H1 (cell line): ENCODE measurements at regions of chr5 and their contacts with region 1.

Region 1: DNA sequence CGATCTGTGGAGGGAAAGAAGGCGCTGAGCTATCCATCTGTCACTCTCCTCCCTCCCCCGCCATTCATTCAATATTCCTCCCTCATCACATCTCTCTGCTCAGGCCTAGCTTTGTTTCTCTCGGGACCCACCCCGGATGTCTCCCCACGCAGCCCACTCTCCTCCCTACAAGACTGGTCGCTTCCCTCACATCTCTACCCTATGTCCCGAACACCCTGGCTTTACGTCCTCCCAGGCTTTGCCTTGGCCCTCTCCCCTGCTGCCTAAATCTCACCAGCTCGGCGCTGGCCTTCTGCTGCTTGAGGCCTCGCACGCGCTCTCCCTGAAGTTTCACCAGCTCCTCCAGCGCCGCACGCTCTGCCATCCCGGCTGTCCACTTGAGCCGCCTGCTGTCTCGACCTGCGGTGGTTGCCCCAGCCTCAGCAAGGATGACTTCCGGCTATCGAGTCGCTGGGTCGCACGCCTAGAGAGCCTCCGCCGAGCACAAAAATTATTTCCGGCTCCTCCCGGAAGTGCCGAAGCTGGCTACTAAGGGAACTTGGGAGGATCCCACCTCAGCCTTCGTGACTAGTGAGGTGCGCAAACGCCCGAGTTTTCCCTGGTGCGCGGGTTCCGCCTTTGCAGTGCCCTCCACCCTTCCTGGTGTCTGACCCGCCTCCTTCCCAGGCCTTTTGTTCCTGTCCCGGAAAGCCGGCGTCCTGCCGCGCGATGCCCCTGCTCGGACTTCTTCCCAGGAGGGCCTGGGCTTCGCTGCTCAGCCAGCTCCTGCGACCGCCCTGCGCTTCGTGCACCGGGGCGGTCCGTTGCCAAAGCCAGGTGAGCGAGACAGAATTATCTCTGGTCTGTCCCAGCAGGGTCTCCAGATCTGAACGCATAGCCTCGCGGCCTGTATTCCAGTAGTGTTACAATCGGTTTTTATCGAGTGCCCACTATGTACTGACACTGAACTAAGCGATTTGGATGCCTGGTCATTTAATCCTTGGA is at the starts of genes HARS1 and HARS2:
- DNase-seq: peak; percentile 88 to 91
- H3K4me3 ChIP-seq: peak within 1 kb of the TSS; percentile 76 to 98 (median 88)
- H3K27ac ChIP-seq: 0 out of 2 replicates have a peak within 1 kb of the TSS, but pooled peaks have one; percentile 43
- H3K4me1 ChIP-seq: no peaks in the 10 kb centered on the region; a peak in 1 of 7 replicates
- H3K27me3 ChIP-seq: no peaks in the 10 kb centered on the region
- CTCF ChIP-seq: no peak
- EP300 ChIP-seq: no peak
- POLR2A ChIP-seq: peak; percentile 71 to 77
- RAD21 ChIP-seq: no peak
- total RNA-seq, gene HARS1: 55.6 and 56.8 TPM in 2 replicates
- total RNA-seq, gene HARS2: 21.4 and 23.1 TPM in 2 replicates

Region 2: DNA sequence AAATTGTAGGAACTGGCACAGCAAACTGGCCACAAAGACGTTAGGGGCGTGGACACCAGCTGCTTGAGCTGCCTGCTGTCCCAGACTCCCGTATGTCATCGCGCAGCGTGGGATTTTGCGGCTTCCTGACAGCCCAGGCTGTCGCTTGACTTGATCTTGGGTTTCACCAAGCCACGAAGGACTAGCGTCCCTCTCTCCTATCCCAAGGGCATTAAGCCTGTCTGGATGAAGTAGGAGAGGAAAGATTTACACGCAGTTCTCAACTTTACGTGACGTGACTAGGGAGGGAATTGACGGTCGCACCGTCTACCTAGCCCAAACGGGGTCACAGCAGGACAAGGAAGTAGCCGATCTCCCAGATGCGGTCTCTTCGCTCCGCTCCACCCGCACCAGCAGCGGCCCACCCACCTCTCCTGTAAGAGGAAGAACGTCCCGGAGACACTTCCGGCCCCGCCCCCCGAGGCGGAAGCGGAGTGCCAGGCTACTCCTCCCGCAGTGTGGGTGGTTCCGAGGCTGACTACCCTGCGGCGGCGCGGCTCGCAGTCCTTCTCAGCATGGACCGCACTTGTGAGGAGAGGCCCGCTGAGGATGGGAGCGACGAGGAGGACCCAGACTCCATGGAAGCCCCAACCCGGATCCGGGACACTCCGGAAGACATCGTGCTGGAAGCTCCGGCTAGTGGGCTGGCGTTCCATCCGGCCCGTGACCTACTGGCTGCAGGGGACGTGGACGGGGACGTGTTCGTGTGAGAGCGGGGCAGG is 26.7 kb before region 1 on chr5 and contains the start of gene WDR55:
- CTCF ChIA-PET with region 1: interaction called, 3 read pairs
- POLR2A ChIA-PET with region 1: interaction called, 85 read pairs
- DNase-seq: peak; percentile 79 to 94
- H3K4me3 ChIP-seq: peak within 1 kb of the TSS; percentile 82 to 98 (median 94)
- H3K27ac ChIP-seq: no peak within 1 kb of the TSS
- H3K4me1 ChIP-seq: no peaks in the 10 kb centered on the region; a peak in 1 of 7 replicates
- H3K27me3 ChIP-seq: no peaks in the 10 kb centered on the region
- CTCF ChIP-seq: no peak
- EP300 ChIP-seq: 0 out of 3 replicates have a peak, but pooled peaks of 1 of the 2 experiments have one; percentile 11
- POLR2A ChIP-seq: peak in 1 of 2 experiments; percentile 71; a peak in 2 of 3 replicates
- RAD21 ChIP-seq: no peak
- total RNA-seq, gene WDR55: 22.7 and 22.8 TPM in 2 replicates

Region 3: DNA sequence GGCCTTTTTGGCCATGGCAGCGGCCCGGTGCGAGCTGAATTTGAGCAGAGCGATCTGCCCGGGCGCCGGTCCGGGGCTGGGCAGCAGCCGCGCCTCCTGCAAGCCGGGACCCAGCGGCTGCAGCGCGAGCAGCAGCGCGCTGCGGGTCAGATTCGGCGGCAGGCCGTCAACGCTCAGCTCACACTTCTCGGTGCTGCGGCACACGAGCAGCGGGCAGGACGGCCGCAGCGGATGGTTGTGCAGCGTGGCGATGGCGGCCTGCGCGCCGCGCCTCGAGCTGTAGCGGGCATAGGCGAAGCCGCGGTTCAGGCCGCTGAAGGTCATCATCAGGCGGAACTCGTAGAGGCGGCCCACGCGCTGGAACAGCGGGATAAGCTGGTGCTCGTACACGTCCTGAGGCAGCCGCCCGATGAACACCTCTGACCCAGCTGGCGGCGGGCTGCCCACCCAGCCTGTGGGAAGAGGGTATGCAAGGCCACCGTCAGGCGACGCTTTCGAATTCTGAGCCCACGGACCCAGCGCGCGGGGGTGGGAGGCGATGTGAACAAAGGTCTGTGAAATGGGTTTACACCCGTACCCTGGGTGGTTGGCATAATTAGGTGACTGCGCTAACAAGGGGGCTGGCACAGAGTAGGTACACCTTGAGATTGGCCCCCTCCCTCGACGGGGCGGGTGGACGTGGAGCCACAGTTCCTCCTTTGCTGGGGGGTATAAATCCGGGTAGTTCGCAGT is 18.6 kb before region 1 on chr5:
- CTCF ChIA-PET with region 1: interaction called, 11 read pairs
- POLR2A ChIA-PET with region 1: interaction called, 85 read pairs
- DNase-seq: peak in 1 of 2 experiments; percentile 52
- H3K4me3 ChIP-seq: no peak overlapping the region
- H3K27ac ChIP-seq: no peak overlapping the region
- H3K4me1 ChIP-seq: no peaks in the 10 kb centered on the region; a peak in 1 of 7 replicates
- H3K27me3 ChIP-seq: no peaks in the 10 kb centered on the region
- CTCF ChIP-seq: no peak
- EP300 ChIP-seq: no peak
- POLR2A ChIP-seq: no peak
- RAD21 ChIP-seq: no peak